CD8-positive, alpha-beta memory T cell (primary cell): ENCODE measurements at regions of chr1 and their contacts with region 1.

Region 1: GRCh38 chr1:20964540-20965484 is 177.7 kb upstream of the HP1BP3 start:
- DNase-seq: no peak
- H3K4me3 ChIP-seq: no peak overlapping the region
- H3K4me3 Mint-ChIP-seq: no peak overlapping the region
- H3K27ac ChIP-seq: no peak overlapping the region
- H3K27ac Mint-ChIP-seq: peak overlapping the region in 4 of 8 donors; percentile 31 to 67 (median 48)
- H3K4me1 ChIP-seq: no peaks in the 10 kb centered on the region
- H3K4me1 Mint-ChIP-seq: peaks cover 0 to 5% (median 0%) of the 10 kb centered on the region in 3 donors
- H3K27me3 ChIP-seq: no peaks in the 10 kb centered on the region
- H3K27me3 Mint-ChIP-seq: peaks cover 0 to 1% of the 10 kb centered on the region in 2 donors

Region 2: GRCh38 chr1:20981915-20982314 is 17.1 kb after region 1 on chr1:
- CTCF ChIA-PET with region 1: interaction called, 3 read pairs
- POLR2A ChIA-PET with region 1: interaction called, 10 read pairs
- DNase-seq: no peak
- H3K4me3 ChIP-seq: no peak overlapping the region
- H3K4me3 Mint-ChIP-seq: no peak overlapping the region
- H3K27ac ChIP-seq: no peak overlapping the region
- H3K27ac Mint-ChIP-seq: peak overlapping the region in 1 of 8 donors; percentile 5
- H3K4me1 ChIP-seq: no peaks in the 10 kb centered on the region
- H3K4me1 Mint-ChIP-seq: peaks cover 0 to 1% (median 0%) of the 10 kb centered on the region in 3 donors
- H3K27me3 ChIP-seq: no peaks in the 10 kb centered on the region
- H3K27me3 Mint-ChIP-seq: no peaks in the 10 kb centered on the region

Region 3: DNA sequence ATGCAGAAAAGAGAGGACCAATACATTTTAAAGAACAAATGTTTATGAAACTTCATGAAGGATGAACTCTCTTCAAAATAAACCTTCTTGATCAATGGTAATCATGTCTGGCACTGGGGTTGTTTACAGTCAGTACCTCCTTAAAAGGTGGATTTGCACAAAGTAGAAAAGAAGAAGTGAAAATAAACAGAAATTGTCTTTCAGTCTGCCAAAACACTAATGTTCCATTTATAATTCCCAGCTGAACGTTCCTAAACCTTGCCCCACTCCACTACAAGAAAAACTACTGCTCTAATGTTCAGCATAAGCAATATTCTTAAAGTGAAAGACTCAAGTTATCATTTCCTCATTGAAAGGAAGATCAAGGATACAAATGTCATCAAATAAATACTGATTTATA is 125.7 kb after region 1 on chr1:
- CTCF ChIA-PET with region 1: no interaction called
- POLR2A ChIA-PET with region 1: no interaction called
- DNase-seq: no peak
- H3K4me3 ChIP-seq: no peak overlapping the region
- H3K4me3 Mint-ChIP-seq: no peak overlapping the region
- H3K27ac ChIP-seq: no peak overlapping the region
- H3K27ac Mint-ChIP-seq: peak overlapping the region in 2 of 8 donors; percentile 14 to 42
- H3K4me1 ChIP-seq: no peaks in the 10 kb centered on the region
- H3K4me1 Mint-ChIP-seq: peaks cover 3 to 7% (median 7%) of the 10 kb centered on the region in 3 donors
- H3K27me3 ChIP-seq: no peaks in the 10 kb centered on the region
- H3K27me3 Mint-ChIP-seq: no peaks in the 10 kb centered on the region

Region 4: DNA sequence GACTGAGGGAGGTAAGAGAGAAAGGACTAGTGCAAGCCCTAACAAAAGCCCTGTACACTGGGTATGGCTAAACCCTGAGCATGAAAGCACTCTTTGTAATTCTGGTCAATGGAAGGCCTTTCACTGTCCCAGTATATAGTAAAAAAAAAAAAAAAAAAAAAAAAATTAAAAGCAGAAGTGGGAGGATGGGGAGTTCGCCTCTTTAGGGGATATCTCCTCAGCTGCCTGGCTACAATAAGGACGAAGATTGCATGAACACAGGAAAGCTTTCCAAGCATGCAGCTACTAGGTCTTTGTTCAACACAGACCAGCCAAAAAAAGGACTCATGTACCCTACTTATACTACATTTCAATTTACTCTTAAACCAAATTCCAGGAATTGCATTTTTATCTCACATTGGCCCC is 152.8 kb after region 1 on chr1:
- CTCF ChIA-PET with region 1: no interaction called
- POLR2A ChIA-PET with region 1: no interaction called
- DNase-seq: no peak
- H3K4me3 ChIP-seq: no peak overlapping the region
- H3K4me3 Mint-ChIP-seq: no peak overlapping the region
- H3K27ac ChIP-seq: no peak overlapping the region
- H3K27ac Mint-ChIP-seq: no peak overlapping the region
- H3K4me1 ChIP-seq: no peaks in the 10 kb centered on the region
- H3K4me1 Mint-ChIP-seq: no peaks in the 10 kb centered on the region
- H3K27me3 ChIP-seq: no peaks in the 10 kb centered on the region
- H3K27me3 Mint-ChIP-seq: no peaks in the 10 kb centered on the region